Activated CD4-positive, alpha-beta memory T cell treated with anti-CD3 and anti-CD28 coated beads, Interleukin-2, amount 10 ng/mL, durations not matched to agents 7 days and 5 days (primary cell): ENCODE measurements at regions of chr11 and their contacts with region 1.

Region 1: GRCh38 chr11:34051349-34052035 is at the start of gene CAPRIN1:
- DNase-seq: peak; percentile 85
- H3K4me3 Mint-ChIP-seq: peak within 1 kb of the TSS; percentile 95
- H3K27ac Mint-ChIP-seq: peak within 1 kb of the TSS; percentile 89
- H3K4me1 Mint-ChIP-seq: peaks cover 24% of the 10 kb centered on the region
- H3K27me3 Mint-ChIP-seq: peaks cover 2% of the 10 kb centered on the region
- total RNA-seq, gene CAPRIN1: 191 to 200 TPM

Region 2: GRCh38 chr11:34006876-34007275 is 44.6 kb before region 1 on chr11:
- CTCF ChIA-PET with region 1: no interaction called
- POLR2A ChIA-PET with region 1: no interaction called
- DNase-seq: no peak
- H3K4me3 Mint-ChIP-seq: no peak overlapping the region
- H3K27ac Mint-ChIP-seq: no peak overlapping the region
- H3K4me1 Mint-ChIP-seq: no peaks in the 10 kb centered on the region
- H3K27me3 Mint-ChIP-seq: peaks cover 26% of the 10 kb centered on the region

Region 3: DNA sequence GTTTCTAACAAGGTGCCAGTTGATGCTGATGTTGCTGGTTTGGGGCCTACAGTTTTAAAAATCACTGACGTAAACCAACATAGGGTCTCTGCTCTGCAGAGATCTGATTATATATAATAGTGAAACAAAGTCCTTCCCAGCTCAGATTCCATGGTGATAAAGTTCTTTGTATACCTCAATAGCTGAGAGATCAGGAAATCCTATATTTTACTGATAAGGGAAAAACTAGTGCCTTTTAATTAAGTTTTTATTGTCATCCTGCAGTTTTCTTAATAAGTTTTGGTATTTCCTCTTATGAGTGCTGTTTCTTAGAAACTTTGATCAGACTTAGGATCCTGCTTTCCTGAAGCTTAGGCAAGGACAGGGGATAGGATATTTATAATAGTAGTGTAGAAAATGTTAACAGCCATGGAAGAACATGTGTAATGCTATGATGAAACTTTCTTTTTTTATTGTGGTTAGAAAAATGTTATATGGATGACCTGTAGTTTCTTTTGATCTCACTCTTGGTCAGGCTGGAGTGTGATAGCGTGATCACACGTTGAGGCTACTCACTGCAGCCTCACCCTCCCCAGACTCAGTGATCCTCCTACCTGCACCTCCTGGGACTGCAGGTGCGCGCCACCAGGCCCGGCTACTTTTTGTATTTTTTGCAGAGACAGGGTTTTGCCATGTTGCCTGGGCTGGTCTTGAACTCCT is 14.2 kb after region 1 on chr11:
- CTCF ChIA-PET with region 1: interaction called, 5 read pairs
- POLR2A ChIA-PET with region 1: interaction called, 37 read pairs
- DNase-seq: no peak
- H3K4me3 Mint-ChIP-seq: no peak overlapping the region
- H3K27ac Mint-ChIP-seq: peak overlapping the region; percentile 47
- H3K4me1 Mint-ChIP-seq: peaks cover 55% of the 10 kb centered on the region
- H3K27me3 Mint-ChIP-seq: no peaks in the 10 kb centered on the region

Region 4: DNA sequence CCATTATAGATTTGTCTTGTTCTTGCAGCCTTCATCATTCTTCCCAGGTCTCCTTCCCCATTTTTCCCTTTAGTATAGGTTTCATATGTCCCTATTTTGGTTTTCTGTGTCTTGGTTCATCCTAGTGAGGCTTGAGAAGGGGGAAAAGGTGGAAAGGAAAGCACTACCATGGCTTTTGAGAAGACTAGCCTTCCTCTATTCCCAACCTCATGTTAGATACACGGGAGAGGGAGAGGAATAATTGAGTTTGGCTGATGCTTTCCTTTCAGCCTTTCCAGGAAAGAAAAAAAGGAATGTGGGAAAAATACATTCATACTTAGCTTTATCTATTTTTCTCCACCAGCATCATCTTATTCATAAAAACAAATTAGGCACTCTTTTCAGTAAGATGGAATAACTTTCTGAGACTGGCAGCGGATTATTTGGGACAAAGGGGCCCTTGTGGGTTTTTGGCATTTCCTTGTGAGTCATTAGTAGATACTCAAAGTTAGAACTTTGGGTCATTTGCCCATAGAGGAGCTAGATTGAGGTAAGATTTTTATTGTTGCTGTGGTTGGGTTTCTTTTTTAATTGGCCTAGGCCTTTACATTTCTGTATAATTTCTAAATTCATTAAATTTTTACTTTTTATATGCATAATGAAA is 23.8 kb after region 1 on chr11:
- CTCF ChIA-PET with region 1: no interaction called
- POLR2A ChIA-PET with region 1: interaction called, 14 read pairs
- DNase-seq: no peak
- H3K4me3 Mint-ChIP-seq: no peak overlapping the region
- H3K27ac Mint-ChIP-seq: peak overlapping the region; percentile 50
- H3K4me1 Mint-ChIP-seq: peaks cover 48% of the 10 kb centered on the region
- H3K27me3 Mint-ChIP-seq: no peaks in the 10 kb centered on the region